Activated CD8-positive, alpha-beta memory T cell treated with anti-CD3 and anti-CD28 coated beads, Interleukin-2, amount 10 ng/mL, durations not matched to agents 7 days and 5 days (primary cell): ENCODE measurements at regions of chr6 and their contacts with region 1.

Region 1: GRCh38 chr6:52263709-52264540 is 19.6 kb upstream of the IL17F start:
- DNase-seq: peak; percentile 81
- ATAC-seq: peak; percentile 73
- H3K4me3 Mint-ChIP-seq: no peak overlapping the region
- H3K27ac Mint-ChIP-seq: peak overlapping the region; percentile 7
- H3K4me1 Mint-ChIP-seq: peaks cover 12% of the 10 kb centered on the region
- H3K27me3 Mint-ChIP-seq: no peaks in the 10 kb centered on the region

Region 2: GRCh38 chr6:52162940-52163908 is 100.7 kb before region 1 on chr6:
- CTCF ChIA-PET with region 1: interaction called, 53 read pairs
- DNase-seq: no peak
- ATAC-seq: peak; percentile 61
- H3K4me3 Mint-ChIP-seq: no peak overlapping the region
- H3K27ac Mint-ChIP-seq: no peak overlapping the region
- H3K4me1 Mint-ChIP-seq: peaks cover 15% of the 10 kb centered on the region
- H3K27me3 Mint-ChIP-seq: peaks cover 80% of the 10 kb centered on the region

Region 3: GRCh38 chr6:52213127-52213526 is 50.8 kb before region 1 on chr6:
- CTCF ChIA-PET with region 1: interaction called, 10 read pairs
- DNase-seq: no peak
- ATAC-seq: no peak
- H3K4me3 Mint-ChIP-seq: no peak overlapping the region
- H3K27ac Mint-ChIP-seq: no peak overlapping the region
- H3K4me1 Mint-ChIP-seq: peaks cover 5% of the 10 kb centered on the region
- H3K27me3 Mint-ChIP-seq: peaks cover 40% of the 10 kb centered on the region

Region 4: GRCh38 chr6:52233975-52234823 is 29.7 kb before region 1 on chr6:
- CTCF ChIA-PET with region 1: interaction called, 11 read pairs
- DNase-seq: peak; percentile 57
- ATAC-seq: no peak
- H3K4me3 Mint-ChIP-seq: no peak overlapping the region
- H3K27ac Mint-ChIP-seq: no peak overlapping the region
- H3K4me1 Mint-ChIP-seq: peaks cover 17% of the 10 kb centered on the region
- H3K27me3 Mint-ChIP-seq: peaks cover 83% of the 10 kb centered on the region

Region 5: GRCh38 chr6:52251113-52251512 is 12.8 kb before region 1 on chr6:
- CTCF ChIA-PET with region 1: interaction called, 10 read pairs
- DNase-seq: no peak
- ATAC-seq: no peak
- H3K4me3 Mint-ChIP-seq: no peak overlapping the region
- H3K27ac Mint-ChIP-seq: no peak overlapping the region
- H3K4me1 Mint-ChIP-seq: peaks cover 39% of the 10 kb centered on the region
- H3K27me3 Mint-ChIP-seq: peaks cover 82% of the 10 kb centered on the region

Region 6: GRCh38 chr6:52352239-52353008 is 88.5 kb after region 1 on chr6:
- CTCF ChIA-PET with region 1: no interaction called
- DNase-seq: no peak
- ATAC-seq: no peak
- H3K4me3 Mint-ChIP-seq: no peak overlapping the region
- H3K27ac Mint-ChIP-seq: no peak overlapping the region
- H3K4me1 Mint-ChIP-seq: peaks cover 12% of the 10 kb centered on the region
- H3K27me3 Mint-ChIP-seq: peaks cover 5% of the 10 kb centered on the region